ENCODE measurements at regions of chr11 and their contacts with region 1.

Region 1: DNA sequence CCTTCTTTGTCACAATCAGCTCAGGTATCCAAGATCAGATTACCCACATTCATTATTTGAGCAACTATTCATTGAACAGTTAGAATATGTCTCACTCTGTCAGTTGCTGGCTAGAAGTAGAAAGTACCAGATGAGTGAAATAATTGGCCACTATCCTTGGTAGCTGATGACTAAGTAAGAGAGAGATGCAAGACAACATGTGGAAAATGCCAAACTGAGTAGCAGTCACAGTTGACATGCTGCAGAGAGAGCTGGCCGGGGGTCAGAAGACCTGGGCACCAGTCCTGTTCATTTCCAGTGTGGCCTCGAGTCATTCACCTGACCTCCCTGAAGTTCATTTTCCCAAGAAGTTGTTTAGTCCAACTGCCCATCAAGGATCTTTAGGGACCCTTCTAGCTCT is 22.5 kb upstream of the SMIM35 start:
- DNase-seq: no peak
- H3K4me3 ChIP-seq: no peak overlapping the region
- H3K27ac ChIP-seq: no peak overlapping the region
- H3K4me1 ChIP-seq: no peaks in the 10 kb centered on the region
- H3K27me3 ChIP-seq: no peaks in the 10 kb centered on the region
- CTCF ChIP-seq: no peak
- POLR2A ChIP-seq: no peak

Region 2: DNA sequence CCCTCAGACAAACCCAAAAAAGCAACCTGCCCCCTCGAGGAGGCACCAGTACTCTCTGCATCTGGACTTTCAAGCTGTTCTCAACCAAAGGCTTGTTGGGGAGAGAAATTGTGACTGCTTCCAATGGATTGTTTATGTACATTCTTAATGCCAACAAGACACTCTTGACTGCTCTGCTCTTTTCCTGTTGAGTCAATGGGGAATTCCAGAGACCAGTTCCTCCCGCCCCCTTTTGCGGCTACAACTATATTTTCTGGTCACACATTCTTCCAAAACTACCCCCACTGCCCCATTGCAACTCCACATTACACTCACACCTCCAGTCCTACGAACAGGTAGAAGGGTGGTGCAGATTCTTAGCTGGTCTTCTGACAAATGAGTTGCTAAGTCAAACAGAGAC is 499.2 kb before region 1 on chr11:
- intact Hi-C with region 1: no loop called
- DNase-seq: no peak
- H3K4me3 ChIP-seq: no peak overlapping the region
- H3K27ac ChIP-seq: no peak overlapping the region
- H3K4me1 ChIP-seq: no peaks in the 10 kb centered on the region
- H3K27me3 ChIP-seq: no peaks in the 10 kb centered on the region
- CTCF ChIP-seq: no peak
- POLR2A ChIP-seq: no peak

Region 3: GRCh38 chr11:118027691-118028090 is 81.5 kb before region 1 on chr11:
- intact Hi-C with region 1: no loop called
- DNase-seq: no peak
- H3K4me3 ChIP-seq: no peak overlapping the region
- H3K27ac ChIP-seq: no peak overlapping the region
- H3K4me1 ChIP-seq: no peaks in the 10 kb centered on the region
- H3K27me3 ChIP-seq: no peaks in the 10 kb centered on the region
- CTCF ChIP-seq: no peak
- POLR2A ChIP-seq: no peak

Region 4: GRCh38 chr11:118128721-118129470 is 19.7 kb after region 1 on chr11:
- intact Hi-C with region 1: loop called (anchors 2 kb)
- DNase-seq: no peak
- H3K4me3 ChIP-seq: no peak overlapping the region
- H3K27ac ChIP-seq: no peak overlapping the region
- H3K4me1 ChIP-seq: no peaks in the 10 kb centered on the region
- H3K27me3 ChIP-seq: no peaks in the 10 kb centered on the region
- CTCF ChIP-seq: no peak
- POLR2A ChIP-seq: no peak

Region 5: GRCh38 chr11:118198370-118198769 is 89.1 kb after region 1 on chr11:
- intact Hi-C with region 1: no loop called
- DNase-seq: peak; percentile 88
- H3K4me3 ChIP-seq: no peak overlapping the region
- H3K27ac ChIP-seq: no peak overlapping the region
- H3K4me1 ChIP-seq: peaks cover 9% of the 10 kb centered on the region
- H3K27me3 ChIP-seq: no peaks in the 10 kb centered on the region
- CTCF ChIP-seq: peak; percentile 30 to 76 (median 68)
- POLR2A ChIP-seq: no peak